Activated naive CD4-positive, alpha-beta T cell treated with anti-CD3 and anti-CD28 coated beads for 36 hours (primary cell): ENCODE measurements at regions of chr1 and their contacts with region 1.

Region 1: DNA sequence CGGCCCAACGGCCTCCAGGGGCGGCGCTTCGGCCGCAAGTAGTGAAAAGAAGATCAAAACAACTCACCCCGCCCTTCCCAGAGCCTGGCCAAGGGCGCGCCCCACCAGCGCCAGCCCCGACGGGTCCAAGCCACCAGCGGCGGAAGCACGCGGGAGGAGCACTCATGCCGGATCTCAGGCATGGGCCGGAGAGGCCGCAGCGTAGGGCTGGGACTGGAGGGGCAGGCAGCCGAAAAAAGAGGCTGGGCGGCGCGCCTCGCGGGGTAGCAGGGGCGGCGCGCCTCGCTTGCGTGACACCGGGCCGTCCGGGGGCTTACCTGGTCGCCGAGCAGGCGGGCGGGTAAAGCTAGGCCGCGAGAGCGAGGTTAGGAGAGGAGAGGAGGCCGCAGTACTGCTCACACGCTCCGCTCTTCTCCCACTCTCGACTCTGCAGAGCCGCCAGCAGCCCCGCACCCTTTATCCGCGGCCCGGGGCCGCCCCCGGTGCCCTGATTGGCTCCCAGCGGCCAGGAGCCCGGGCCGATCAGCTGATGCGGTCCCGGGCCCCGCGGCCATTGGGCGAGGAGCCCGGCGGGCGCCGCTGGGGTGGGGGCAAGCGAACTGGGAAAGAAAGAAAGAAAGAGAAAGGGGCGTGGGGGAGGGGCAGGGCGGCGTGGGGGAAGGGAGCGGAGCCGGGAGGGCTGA is at the start of gene GLUL:
- DNase-seq: peak; percentile 76
- H3K4me3 Mint-ChIP-seq: peak within 1 kb of the TSS; percentile 87
- H3K27ac Mint-ChIP-seq: peak within 1 kb of the TSS; percentile 72
- H3K4me1 Mint-ChIP-seq: peaks cover 18% of the 10 kb centered on the region
- H3K27me3 Mint-ChIP-seq: no peaks in the 10 kb centered on the region
- total RNA-seq, gene GLUL: 71.5 to 73.1 TPM

Region 2: GRCh38 chr1:182149411-182149965 is 242.0 kb before region 1 on chr1:
- CTCF ChIA-PET with region 1: interaction called, 153 read pairs
- intact Hi-C with region 1: no loop called
- DNase-seq: peak; percentile 60
- H3K4me3 Mint-ChIP-seq: no peak overlapping the region
- H3K27ac Mint-ChIP-seq: peak overlapping the region; percentile 25
- H3K4me1 Mint-ChIP-seq: peaks cover 26% of the 10 kb centered on the region
- H3K27me3 Mint-ChIP-seq: no peaks in the 10 kb centered on the region

Region 3: DNA sequence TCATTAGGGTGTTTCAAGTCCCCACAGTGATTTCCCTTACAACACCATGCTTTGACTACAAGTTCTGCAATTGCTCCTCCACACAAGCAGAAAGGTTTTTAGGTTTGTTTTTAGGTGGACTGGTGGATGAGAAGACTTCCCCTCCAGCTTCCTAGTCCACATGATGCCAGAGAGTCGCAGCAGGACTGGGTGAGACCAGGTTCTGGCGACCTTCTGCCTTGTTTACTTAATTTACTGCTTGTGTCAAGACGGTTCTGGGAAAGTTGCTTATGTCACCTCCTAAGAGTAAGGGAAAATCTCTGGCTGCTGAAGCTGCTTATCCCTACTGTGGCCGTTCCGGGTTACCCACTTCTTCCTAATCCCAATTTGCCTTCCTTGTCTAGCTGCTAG is 76.3 kb before region 1 on chr1:
- CTCF ChIA-PET with region 1: no interaction called
- intact Hi-C with region 1: no loop called
- DNase-seq: no peak
- H3K4me3 Mint-ChIP-seq: no peak overlapping the region
- H3K27ac Mint-ChIP-seq: no peak overlapping the region
- H3K4me1 Mint-ChIP-seq: no peaks in the 10 kb centered on the region
- H3K27me3 Mint-ChIP-seq: no peaks in the 10 kb centered on the region

Region 4: GRCh38 chr1:182789138-182790076 is 397.9 kb after region 1 on chr1 and contains the start of gene NPL:
- CTCF ChIA-PET with region 1: no interaction called
- intact Hi-C with region 1: loop called (anchors 1 kb)
- DNase-seq: peak; percentile 85
- H3K4me3 Mint-ChIP-seq: peak within 1 kb of the TSS; percentile 81
- H3K27ac Mint-ChIP-seq: peak within 1 kb of the TSS; percentile 22
- H3K4me1 Mint-ChIP-seq: peaks cover 13% of the 10 kb centered on the region
- H3K27me3 Mint-ChIP-seq: no peaks in the 10 kb centered on the region
- total RNA-seq, gene NPL: 4.6 to 5.9 TPM